ENCODE measurements at regions of chr7 and their contacts with region 1.

Region 1: GRCh38 chr7:64366921-64367320 is 53.2 kb downstream of the ZNF736 start:
- DNase-seq: no peak
- H3K4me3 ChIP-seq: no peak overlapping the region
- H3K27ac ChIP-seq: no peak overlapping the region
- H3K4me1 ChIP-seq: no peaks in the 10 kb centered on the region
- H3K27me3 ChIP-seq: no peaks in the 10 kb centered on the region
- CTCF ChIP-seq: no peak
- EP300 ChIP-seq: no peak
- POLR2A ChIP-seq: no peak

Region 2: GRCh38 chr7:64574540-64575126 is 207.7 kb after region 1 on chr7:
- in situ Hi-C with region 1: no loop called
- intact Hi-C with region 1: loop called (anchors 5 kb)
- DNase-seq: no peak
- H3K4me3 ChIP-seq: peak overlapping the region in 3 of 4 donors; percentile 16 to 30 (median 16)
- H3K27ac ChIP-seq: no peak overlapping the region
- H3K4me1 ChIP-seq: no peaks in the 10 kb centered on the region
- H3K27me3 ChIP-seq: peaks cover 23% of the 10 kb centered on the region
- CTCF ChIP-seq: no peak
- EP300 ChIP-seq: no peak
- POLR2A ChIP-seq: no peak

Region 3: DNA sequence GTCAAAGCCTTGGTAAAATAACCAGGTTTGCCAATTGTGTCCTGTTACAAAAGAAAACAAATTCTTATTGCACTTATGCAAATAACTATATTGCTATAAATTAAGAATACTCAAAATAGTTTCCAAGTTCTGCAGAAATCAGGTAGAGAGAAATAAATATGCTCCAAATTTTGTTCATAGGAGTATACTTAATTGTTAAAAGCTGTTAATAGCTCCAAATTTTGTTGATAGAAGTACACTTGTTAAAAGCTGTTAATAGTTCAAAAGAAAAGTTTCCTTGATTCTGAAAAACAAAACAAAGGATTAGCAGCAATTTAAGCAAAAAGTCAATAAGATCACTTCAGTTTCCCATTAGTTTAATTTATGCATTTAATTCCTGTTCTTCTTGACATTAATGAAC is 380.9 kb after region 1 on chr7:
- in situ Hi-C with region 1: no loop called
- intact Hi-C with region 1: no loop called
- DNase-seq: no peak
- H3K4me3 ChIP-seq: no peak overlapping the region
- H3K27ac ChIP-seq: no peak overlapping the region
- H3K4me1 ChIP-seq: no peaks in the 10 kb centered on the region
- H3K27me3 ChIP-seq: no peaks in the 10 kb centered on the region
- CTCF ChIP-seq: no peak
- EP300 ChIP-seq: no peak
- POLR2A ChIP-seq: no peak

Region 4: GRCh38 chr7:64768824-64769223 is 401.9 kb after region 1 on chr7:
- in situ Hi-C with region 1: no loop called
- intact Hi-C with region 1: no loop called
- DNase-seq: no peak
- H3K4me3 ChIP-seq: no peak overlapping the region
- H3K27ac ChIP-seq: no peak overlapping the region
- H3K4me1 ChIP-seq: no peaks in the 10 kb centered on the region
- H3K27me3 ChIP-seq: no peaks in the 10 kb centered on the region
- CTCF ChIP-seq: no peak
- EP300 ChIP-seq: no peak
- POLR2A ChIP-seq: no peak

Measured in transverse colon (tissue), 4 donors.